ENCODE measurements at regions of chrX and their contacts with region 1.

Region 1: DNA sequence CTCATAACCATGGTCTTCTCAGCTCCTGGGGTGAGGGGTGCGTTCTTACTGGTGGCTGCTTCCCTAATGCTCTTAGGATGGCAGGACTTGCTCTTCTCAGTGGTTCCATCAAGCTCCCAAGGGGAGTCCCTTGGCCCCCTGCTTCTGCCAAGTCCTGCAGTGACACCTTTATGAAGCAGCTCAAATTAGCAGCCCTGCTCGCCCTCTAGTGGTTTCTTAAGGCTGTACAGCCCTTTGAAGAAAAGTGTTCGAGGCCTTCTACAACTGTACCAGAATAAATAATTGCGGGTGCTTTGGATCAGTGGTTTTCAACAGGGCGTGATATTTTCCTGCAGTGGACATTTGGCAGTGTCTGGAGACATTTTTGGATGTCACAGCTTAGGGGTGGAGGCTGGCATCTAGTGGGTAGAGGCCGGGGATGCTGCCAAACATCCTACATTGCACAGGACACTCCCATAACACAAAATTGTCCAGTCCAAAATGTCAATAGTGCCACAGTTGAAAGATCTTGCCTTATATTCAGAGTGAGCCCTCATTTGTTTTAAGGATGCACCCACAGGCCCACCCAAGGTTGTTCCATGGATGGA is 204.7 kb upstream of the S100G start:
- DNase-seq: peak; percentile 17
- H3K4me3 ChIP-seq: no peak overlapping the region
- H3K27ac ChIP-seq: no peak overlapping the region
- H3K4me1 ChIP-seq: no peaks in the 10 kb centered on the region
- H3K27me3 ChIP-seq: no peaks in the 10 kb centered on the region
- CTCF ChIP-seq: peak; percentile 46 to 54
- POLR2A ChIP-seq: no peak

Region 2: GRCh38 chrX:15761564-15762191 is 683.6 kb before region 1 on chrX:
- CTCF ChIA-PET with region 1: no interaction called
- POLR2A ChIA-PET with region 1: no interaction called
- dilution Hi-C with region 1: no loop called
- intact Hi-C with region 1: loop called (anchors 10 kb)
- DNase-seq: peak; percentile 20
- H3K4me3 ChIP-seq: no peak overlapping the region
- H3K27ac ChIP-seq: no peak overlapping the region
- H3K4me1 ChIP-seq: no peaks in the 10 kb centered on the region
- H3K27me3 ChIP-seq: no peaks in the 10 kb centered on the region
- CTCF ChIP-seq: peak; percentile 36 to 69
- POLR2A ChIP-seq: no peak

Region 3: GRCh38 chrX:17007206-17007683 is 562.0 kb after region 1 on chrX:
- CTCF ChIA-PET with region 1: no interaction called
- POLR2A ChIA-PET with region 1: no interaction called
- dilution Hi-C with region 1: no loop called
- intact Hi-C with region 1: no loop called
- DNase-seq: peak; percentile 10
- H3K4me3 ChIP-seq: no peak overlapping the region
- H3K27ac ChIP-seq: no peak overlapping the region
- H3K4me1 ChIP-seq: no peaks in the 10 kb centered on the region
- H3K27me3 ChIP-seq: no peaks in the 10 kb centered on the region
- CTCF ChIP-seq: peak; percentile 11 to 42
- POLR2A ChIP-seq: no peak